Mammary epithelial cell (primary cell): ENCODE measurements at regions of chr3 and their contacts with region 1.

Region 1: GRCh38 chr3:126982471-126983175 is at the start of gene PLXNA1:
- DNase-seq: peak; percentile 85
- H3K4me3 ChIP-seq: peak within 1 kb of the TSS; percentile 70 to 81 (median 71)
- H3K27ac ChIP-seq: peak within 1 kb of the TSS; percentile 50
- H3K4me1 ChIP-seq: peaks cover 36% of the 10 kb centered on the region
- H3K27me3 ChIP-seq: no peaks in the 10 kb centered on the region
- CTCF ChIP-seq: peak; percentile 81 to 89
- total RNA-seq, gene PLXNA1: 104 to 156 TPM

Region 2: GRCh38 chr3:126522363-126522788 is 460.2 kb before region 1 on chr3:
- CTCF ChIA-PET with region 1: no interaction called
- dilution Hi-C with region 1: no loop called
- in situ Hi-C with region 1: no loop called
- intact Hi-C with region 1: loop called (anchors 5 kb)
- DNase-seq: peak; percentile 31
- H3K4me3 ChIP-seq: no peak overlapping the region
- H3K27ac ChIP-seq: no peak overlapping the region
- H3K4me1 ChIP-seq: peaks cover 5% of the 10 kb centered on the region
- H3K27me3 ChIP-seq: peaks cover 4% of the 10 kb centered on the region
- CTCF ChIP-seq: peak; percentile 62 to 89

Region 3: GRCh38 chr3:126858887-126859286 is 123.7 kb before region 1 on chr3:
- CTCF ChIA-PET with region 1: no interaction called
- dilution Hi-C with region 1: no loop called
- in situ Hi-C with region 1: no loop called
- intact Hi-C with region 1: loop called (anchors 1 kb)
- DNase-seq: peak; percentile 97
- H3K4me3 ChIP-seq: no peak overlapping the region
- H3K27ac ChIP-seq: peak overlapping the region; percentile 36
- H3K4me1 ChIP-seq: peaks cover 20% of the 10 kb centered on the region
- H3K27me3 ChIP-seq: no peaks in the 10 kb centered on the region
- CTCF ChIP-seq: no peak

Region 4: DNA sequence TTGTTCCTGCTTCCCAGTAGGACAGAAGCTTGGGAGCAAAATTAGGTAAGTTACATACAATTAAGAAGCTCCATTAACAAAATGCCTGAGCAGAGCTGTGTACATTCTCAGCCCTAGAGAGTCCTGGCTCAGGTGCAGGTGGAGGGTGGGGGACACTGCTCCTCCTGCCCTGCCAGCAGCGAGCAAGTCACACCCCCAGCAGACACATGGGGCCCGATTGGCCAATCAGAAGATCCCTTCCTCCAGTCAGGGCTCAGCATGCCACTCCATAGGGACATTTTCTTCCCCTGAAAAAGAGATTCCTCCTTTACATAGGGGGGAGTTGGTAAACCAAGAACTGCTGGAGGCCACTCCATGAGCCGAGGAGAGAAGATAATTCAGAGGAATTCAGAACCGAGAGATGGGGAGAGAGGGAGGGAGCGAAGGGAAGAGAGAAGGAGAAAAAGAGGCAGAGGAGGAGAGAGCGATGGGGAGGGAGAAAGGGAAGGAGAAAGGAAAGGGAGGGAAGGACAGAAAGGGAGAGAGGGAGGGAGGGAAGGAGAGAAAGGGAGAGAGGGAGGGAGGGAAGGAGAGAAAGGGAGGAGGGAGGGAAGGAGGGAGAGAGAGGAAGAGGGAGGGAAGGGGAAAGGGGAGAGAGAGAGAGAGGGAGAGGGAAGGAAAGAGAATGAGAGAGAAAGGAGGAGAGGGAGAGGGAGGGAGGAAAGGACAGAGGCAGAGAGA is 62.5 kb after region 1 on chr3:
- CTCF ChIA-PET with region 1: no interaction called
- dilution Hi-C with region 1: loop called (anchors 5 kb)
- in situ Hi-C with region 1: no loop called
- intact Hi-C with region 1: no loop called
- DNase-seq: no peak
- H3K4me3 ChIP-seq: no peak overlapping the region
- H3K27ac ChIP-seq: no peak overlapping the region
- H3K4me1 ChIP-seq: peaks cover 28% of the 10 kb centered on the region
- H3K27me3 ChIP-seq: no peaks in the 10 kb centered on the region
- CTCF ChIP-seq: no peak

Region 5: DNA sequence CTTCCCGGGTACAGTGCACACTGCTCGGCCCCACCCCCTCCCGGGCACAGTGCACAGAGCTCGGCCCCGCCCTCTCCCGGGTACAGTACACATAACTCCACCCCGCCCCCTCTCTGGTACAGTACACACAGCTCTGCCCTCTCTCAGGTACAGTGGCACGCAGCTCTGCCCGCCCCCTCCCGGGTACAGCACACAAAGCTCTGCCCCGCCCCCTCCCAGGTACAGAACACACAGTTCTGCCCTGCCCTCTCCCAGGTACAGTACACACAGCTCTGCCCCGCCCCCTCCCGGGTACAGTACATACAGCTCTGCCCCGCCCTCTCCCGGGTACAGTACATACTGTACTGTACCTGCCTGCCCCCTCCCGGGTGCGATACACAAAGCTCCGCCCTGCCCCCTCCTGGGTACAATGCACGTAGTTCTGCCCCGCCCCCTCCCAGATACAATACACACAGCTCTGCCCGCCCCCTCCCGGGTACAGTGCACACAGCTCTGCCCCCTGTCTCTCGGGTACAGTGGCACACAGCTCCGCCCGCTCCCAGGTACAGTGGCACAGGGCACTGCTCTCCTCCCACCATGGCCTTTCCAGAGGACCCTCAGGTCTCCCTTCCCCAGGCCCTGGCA is 321.6 kb after region 1 on chr3:
- CTCF ChIA-PET with region 1: no interaction called
- dilution Hi-C with region 1: no loop called
- in situ Hi-C with region 1: no loop called
- intact Hi-C with region 1: loop called (anchors 1 kb)
- DNase-seq: peak; percentile 82
- H3K4me3 ChIP-seq: no peak overlapping the region
- H3K27ac ChIP-seq: peak overlapping the region; percentile 50
- H3K4me1 ChIP-seq: peaks cover 22% of the 10 kb centered on the region
- H3K27me3 ChIP-seq: no peaks in the 10 kb centered on the region
- CTCF ChIP-seq: peak in 1 of 2 donors; percentile 41